Mammary epithelial cell (primary cell): ENCODE measurements at regions of chr9 and their contacts with region 1.

Region 1: GRCh38 chr9:129656795-129657390 is 8.6 kb upstream of the PRRX2 start:
- DNase-seq: peak; percentile 66
- H3K4me3 ChIP-seq: no peak overlapping the region
- H3K27ac ChIP-seq: no peak overlapping the region
- H3K4me1 ChIP-seq: peaks cover 3% of the 10 kb centered on the region
- H3K27me3 ChIP-seq: peaks cover 6% of the 10 kb centered on the region
- CTCF ChIP-seq: no peak

Region 2: GRCh38 chr9:129737479-129738274 is 80.8 kb after region 1 on chr9:
- CTCF ChIA-PET with region 1: interaction called, 6 read pairs
- dilution Hi-C with region 1: no loop called
- in situ Hi-C with region 1: loop called in 1 of 2 experiments (anchors 10 kb)
- intact Hi-C with region 1: no loop called
- DNase-seq: peak; percentile 54
- H3K4me3 ChIP-seq: peak overlapping the region; percentile 14 to 44 (median 39)
- H3K27ac ChIP-seq: no peak overlapping the region
- H3K4me1 ChIP-seq: peaks cover 19% of the 10 kb centered on the region
- H3K27me3 ChIP-seq: no peaks in the 10 kb centered on the region
- CTCF ChIP-seq: peak; percentile 63 to 94

Region 3: DNA sequence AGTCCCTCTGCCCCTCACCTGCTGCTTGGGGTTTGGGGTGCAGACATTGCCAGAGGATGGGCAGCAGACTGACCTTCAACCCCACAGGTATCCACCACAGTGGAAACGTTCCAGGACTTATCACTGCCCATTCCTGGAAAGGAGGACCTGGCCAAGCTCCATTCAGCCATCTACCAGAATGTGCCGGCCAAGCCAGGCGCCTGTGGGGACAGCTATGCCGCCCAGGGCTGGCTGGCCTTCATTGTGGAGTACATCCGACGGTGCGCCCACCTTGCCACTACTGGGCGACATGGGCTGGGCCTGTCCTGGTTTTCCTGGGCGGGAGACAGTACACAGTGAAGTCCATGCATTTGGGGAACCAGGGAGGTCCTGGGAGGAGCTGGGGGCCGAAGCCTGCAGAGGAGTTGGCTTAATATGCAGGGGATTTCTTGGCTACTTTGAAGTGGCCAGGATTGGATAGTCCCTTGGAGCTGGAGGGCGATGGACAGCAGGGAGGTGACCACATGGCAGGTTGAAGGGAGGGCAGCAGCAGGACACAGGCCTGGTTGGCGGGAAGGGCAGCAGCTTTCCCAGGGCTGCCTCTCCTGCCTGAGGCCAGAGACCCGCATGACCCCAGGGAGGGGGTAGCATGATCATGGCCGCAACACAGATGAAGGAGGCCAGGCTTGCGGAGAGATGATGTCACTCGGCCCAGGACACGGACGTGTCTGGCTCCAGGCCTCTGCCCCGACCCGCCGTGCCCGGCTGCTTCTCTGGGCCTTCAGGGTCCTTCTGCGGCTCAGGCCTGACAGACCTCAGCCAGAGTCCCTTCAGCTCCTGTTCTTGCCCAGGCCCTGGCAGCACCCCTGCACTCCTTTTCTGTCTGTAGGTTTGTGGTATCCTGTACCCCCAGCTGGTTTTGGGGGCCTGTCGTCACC is 212.9 kb after region 1 on chr9:
- CTCF ChIA-PET with region 1: no interaction called
- dilution Hi-C with region 1: no loop called
- in situ Hi-C with region 1: no loop called
- intact Hi-C with region 1: loop called (anchors 5 kb)
- DNase-seq: no peak
- H3K4me3 ChIP-seq: no peak overlapping the region
- H3K27ac ChIP-seq: no peak overlapping the region
- H3K4me1 ChIP-seq: no peaks in the 10 kb centered on the region
- H3K27me3 ChIP-seq: no peaks in the 10 kb centered on the region
- CTCF ChIP-seq: no peak